ENCODE measurements at regions of chr10 and their contacts with region 1.

Region 1: DNA sequence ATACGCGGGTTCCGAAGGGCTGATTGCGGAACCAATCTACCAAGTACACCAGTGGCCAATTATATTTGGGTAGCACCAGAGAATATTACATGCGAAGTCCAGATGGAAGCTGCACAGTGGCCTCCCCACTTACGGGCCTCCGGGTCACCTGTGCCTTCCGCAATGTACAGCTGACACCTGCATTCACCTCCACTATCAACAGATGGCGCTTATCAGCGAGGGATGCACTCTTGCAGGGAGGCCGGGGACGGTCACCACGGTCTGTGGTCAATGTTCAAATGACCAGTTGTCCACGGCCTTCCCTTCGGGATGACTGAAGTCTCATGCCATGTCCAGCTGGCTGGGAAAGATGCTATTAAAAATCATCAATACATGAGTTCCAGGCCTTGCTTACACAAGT is 47.6 kb downstream of the SLIT1 start:
- DNase-seq: no peak
- H3K4me3 ChIP-seq: no peak overlapping the region
- H3K27ac ChIP-seq: no peak overlapping the region
- H3K4me1 ChIP-seq: peaks cover 6 to 18% (median 14%) of the 10 kb centered on the region in 4 experiments
- H3K27me3 ChIP-seq: peaks cover 0 to 5% (median 2%) of the 10 kb centered on the region in 4 experiments; a peak in 3 of 7 replicates
- CTCF ChIP-seq: peak; percentile 65 to 87 (median 73)
- EP300 ChIP-seq: no peak
- POLR2A ChIP-seq: no peak
- RAD21 ChIP-seq: peak; percentile 59 to 64

Region 2: DNA sequence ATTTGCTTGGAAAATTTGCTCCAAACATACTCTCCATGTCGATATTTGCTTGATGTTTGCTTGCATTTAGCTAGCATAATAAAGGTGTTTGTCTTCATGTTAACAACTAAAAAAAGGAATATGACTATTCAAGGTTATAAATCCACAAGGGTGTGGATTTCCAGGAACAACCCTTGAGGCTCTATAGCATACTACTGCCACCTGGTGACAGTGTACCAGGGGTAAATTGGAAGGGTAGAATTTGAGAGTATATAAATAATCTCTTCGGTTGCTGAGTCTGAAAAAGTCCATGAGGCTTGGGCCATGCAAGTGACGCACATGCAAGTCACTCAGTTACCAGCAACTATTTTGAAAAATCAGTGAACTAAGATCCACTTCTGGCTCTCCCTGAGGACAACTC is 20.8 kb before region 1 on chr10:
- CTCF ChIA-PET with region 1: interaction called, 212 read pairs
- POLR2A ChIA-PET with region 1: interaction called, 3 read pairs
- DNase-seq: no peak
- H3K4me3 ChIP-seq: no peak overlapping the region
- H3K27ac ChIP-seq: no peak overlapping the region
- H3K4me1 ChIP-seq: peaks cover 0 to 4% (median 0%) of the 10 kb centered on the region in 4 experiments; a peak in 2 of 7 replicates
- H3K27me3 ChIP-seq: no peaks in the 10 kb centered on the region
- CTCF ChIP-seq: peak in 2 of 3 experiments; percentile 44 to 59; a peak in 3 of 4 replicates
- EP300 ChIP-seq: no peak
- POLR2A ChIP-seq: no peak
- RAD21 ChIP-seq: peak; percentile 72 to 73

Region 3: DNA sequence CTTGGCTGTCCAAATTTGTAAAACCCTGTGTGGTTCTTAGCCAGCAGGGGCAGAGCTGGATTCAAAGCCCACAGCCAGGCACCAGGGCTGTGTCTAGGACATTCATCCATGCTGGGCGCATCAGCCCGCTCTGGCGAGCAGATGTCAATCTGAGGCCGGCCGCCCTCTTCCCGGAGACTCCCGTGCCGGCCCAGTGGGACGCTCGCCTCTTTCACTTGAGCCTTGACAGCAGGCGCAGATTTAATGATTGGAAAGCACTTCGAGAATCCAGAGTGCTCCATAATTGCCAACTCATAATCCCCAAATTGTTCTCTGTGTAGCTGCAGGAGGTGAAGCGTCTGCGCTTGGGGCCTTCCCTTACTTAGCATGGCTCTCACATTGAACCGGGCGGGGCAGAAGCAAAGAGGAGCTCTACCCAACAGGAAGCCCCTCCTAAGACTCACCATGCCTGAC is 10.9 kb after region 1 on chr10:
- CTCF ChIA-PET with region 1: interaction called, 52 read pairs
- POLR2A ChIA-PET with region 1: interaction called, 3 read pairs
- DNase-seq: no peak
- H3K4me3 ChIP-seq: no peak overlapping the region
- H3K27ac ChIP-seq: no peak overlapping the region
- H3K4me1 ChIP-seq: peaks cover 0 to 3% (median 0%) of the 10 kb centered on the region in 4 experiments; a peak in 1 of 7 replicates
- H3K27me3 ChIP-seq: no peaks in the 10 kb centered on the region
- CTCF ChIP-seq: no peak
- EP300 ChIP-seq: no peak
- POLR2A ChIP-seq: no peak
- RAD21 ChIP-seq: no peak

Region 4: GRCh38 chr10:97157578-97158095 is 19.5 kb after region 1 on chr10:
- CTCF ChIA-PET with region 1: interaction called, 11 read pairs
- POLR2A ChIA-PET with region 1: no interaction called
- DNase-seq: no peak
- H3K4me3 ChIP-seq: no peak overlapping the region
- H3K27ac ChIP-seq: no peak overlapping the region
- H3K4me1 ChIP-seq: no peaks in the 10 kb centered on the region
- H3K27me3 ChIP-seq: no peaks in the 10 kb centered on the region
- CTCF ChIP-seq: no peak
- EP300 ChIP-seq: no peak
- POLR2A ChIP-seq: no peak
- RAD21 ChIP-seq: no peak

Region 5: DNA sequence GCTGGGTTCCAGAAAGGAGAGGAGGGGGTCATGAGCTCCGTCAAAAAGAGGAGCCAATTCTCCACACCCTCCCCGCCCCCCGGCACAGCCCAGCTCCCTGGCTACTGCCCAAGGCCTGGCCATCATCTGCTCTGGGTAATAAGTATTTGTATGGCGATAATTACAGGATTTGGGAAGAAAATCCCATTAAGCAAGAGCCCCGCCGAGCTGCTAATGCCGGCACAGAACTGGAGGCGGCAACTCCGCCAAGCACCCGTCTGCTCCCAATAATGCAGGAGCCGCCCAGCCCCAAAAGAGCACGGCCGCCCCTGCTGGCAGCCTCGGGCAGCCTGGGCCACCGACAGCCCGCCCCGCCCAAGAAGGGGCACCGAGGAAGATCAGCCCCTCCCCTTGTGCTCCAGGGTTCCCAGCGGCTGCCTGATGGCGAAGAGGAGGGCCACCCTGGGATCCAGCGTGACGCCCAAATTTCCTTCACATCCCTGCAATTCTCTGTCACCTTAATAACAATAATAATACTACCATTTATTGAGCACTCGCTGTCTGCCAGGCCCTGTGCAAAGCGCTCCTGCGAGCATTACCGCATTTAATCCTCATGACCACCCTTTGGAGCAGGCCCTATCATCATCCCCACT is 41.7 kb after region 1 on chr10:
- CTCF ChIA-PET with region 1: interaction called, 38 read pairs
- POLR2A ChIA-PET with region 1: no interaction called
- DNase-seq: peak; percentile 31 to 87
- H3K4me3 ChIP-seq: peak overlapping the region in 3 of 4 experiments; percentile 16 to 48 (median 27); a peak in 5 of 8 replicates
- H3K27ac ChIP-seq: no peak overlapping the region
- H3K4me1 ChIP-seq: peaks cover under 1 to 3% (median 2%) of the 10 kb centered on the region in 4 experiments; a peak in 6 of 7 replicates
- H3K27me3 ChIP-seq: peaks cover 10 to 30% (median 22%) of the 10 kb centered on the region in 4 experiments
- CTCF ChIP-seq: peak; percentile 80 to 84 (median 83)
- EP300 ChIP-seq: no peak
- POLR2A ChIP-seq: no peak
- RAD21 ChIP-seq: peak; percentile 80 to 88

Region 6: DNA sequence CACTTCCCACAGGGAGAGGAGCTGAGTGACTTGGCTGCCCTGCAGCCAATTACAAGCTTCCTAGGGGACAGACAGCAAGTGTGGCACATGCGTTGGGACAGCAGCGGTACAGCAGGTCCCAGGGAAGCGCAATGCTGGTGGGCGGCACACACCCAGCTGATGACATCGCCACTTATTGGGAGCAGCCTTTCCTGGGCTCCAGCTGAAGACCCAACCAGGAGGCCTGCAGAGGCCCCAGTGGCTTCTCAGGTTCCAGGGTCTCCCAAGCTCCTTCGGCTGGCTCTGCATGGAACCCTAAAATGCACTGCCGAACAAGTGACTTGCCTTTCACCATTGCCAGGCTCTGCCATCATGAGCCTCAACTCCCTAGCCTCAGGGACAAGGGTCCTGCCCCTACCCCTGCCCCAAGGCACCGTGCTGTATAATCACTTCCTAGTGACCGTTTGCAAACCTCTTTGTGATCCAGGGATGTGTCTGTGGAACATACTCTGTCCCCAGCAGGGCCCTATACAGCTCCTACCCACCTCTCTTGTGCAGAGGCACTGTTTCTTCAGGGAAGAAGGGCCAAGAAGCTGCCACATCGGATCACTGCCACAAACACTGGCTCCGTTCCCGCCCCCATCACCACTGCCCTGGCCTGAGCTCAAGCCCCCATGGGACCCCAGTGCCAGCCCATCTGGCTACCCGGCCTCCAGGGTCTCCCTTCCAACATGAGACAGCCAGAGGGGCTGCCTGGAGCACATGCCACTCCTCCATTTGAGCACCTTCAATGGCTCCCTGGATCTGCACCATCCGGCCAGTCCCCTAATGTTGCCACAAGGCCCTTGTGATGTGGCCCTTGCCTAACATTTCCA is 66.9 kb after region 1 on chr10:
- CTCF ChIA-PET with region 1: interaction called, 63 read pairs
- POLR2A ChIA-PET with region 1: no interaction called
- DNase-seq: no peak
- H3K4me3 ChIP-seq: no peak overlapping the region
- H3K27ac ChIP-seq: no peak overlapping the region
- H3K4me1 ChIP-seq: no peaks in the 10 kb centered on the region
- H3K27me3 ChIP-seq: no peaks in the 10 kb centered on the region
- CTCF ChIP-seq: no peak
- EP300 ChIP-seq: no peak
- POLR2A ChIP-seq: no peak
- RAD21 ChIP-seq: no peak

Region 7: DNA sequence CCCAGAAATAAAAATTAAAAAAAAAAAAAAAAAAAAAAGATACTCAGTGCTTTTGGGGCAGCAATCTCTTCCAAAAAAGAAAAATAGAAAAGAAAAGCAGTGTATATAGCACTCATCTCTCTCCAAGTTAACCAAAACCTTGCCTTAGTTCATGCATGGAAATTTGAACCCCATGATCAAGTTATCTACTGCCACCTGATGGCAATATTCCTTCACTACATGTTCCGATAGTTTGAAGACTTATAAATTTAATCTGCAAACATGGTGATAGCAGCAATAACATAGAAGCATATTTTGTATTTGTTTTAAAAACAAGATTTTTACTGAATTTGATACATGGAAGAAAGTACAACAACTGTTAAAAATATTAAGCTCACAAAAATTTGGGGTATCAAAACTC is 96.2 kb after region 1 on chr10:
- CTCF ChIA-PET with region 1: interaction called, 11 read pairs
- POLR2A ChIA-PET with region 1: no interaction called
- DNase-seq: no peak
- H3K4me3 ChIP-seq: no peak overlapping the region
- H3K27ac ChIP-seq: no peak overlapping the region
- H3K4me1 ChIP-seq: no peaks in the 10 kb centered on the region
- H3K27me3 ChIP-seq: no peaks in the 10 kb centered on the region
- CTCF ChIP-seq: peak in 2 of 3 experiments; percentile 31 to 57; a peak in 2 of 4 replicates
- EP300 ChIP-seq: no peak
- POLR2A ChIP-seq: no peak
- RAD21 ChIP-seq: peak; percentile 70 to 75

Measured in H1 (cell line).